H1 (cell line): ENCODE measurements at regions of chrX and their contacts with region 1.

Region 1: DNA sequence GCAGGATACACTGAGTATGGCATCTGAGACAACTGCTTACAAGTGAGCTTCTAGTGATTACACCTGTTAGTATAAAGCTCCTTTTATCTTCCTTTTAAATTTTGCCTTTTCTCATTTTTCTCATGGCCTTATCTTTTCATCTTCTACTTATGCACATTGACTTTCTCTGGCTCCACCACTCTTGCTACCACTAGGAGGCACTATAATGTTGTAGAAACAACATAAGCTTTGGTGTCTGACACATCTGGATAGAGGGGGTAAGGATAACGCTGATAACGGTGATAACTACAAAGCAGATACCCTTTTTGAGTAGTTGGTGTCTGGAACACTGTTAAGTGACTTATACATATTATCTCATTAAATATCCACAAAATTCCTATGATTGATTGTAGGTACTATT is 187.4 kb upstream of the TEX13C start:
- DNase-seq: no peak
- H3K4me3 ChIP-seq: no peak overlapping the region
- H3K27ac ChIP-seq: no peak overlapping the region
- H3K4me1 ChIP-seq: no peaks in the 10 kb centered on the region
- H3K27me3 ChIP-seq: no peaks in the 10 kb centered on the region
- CTCF ChIP-seq: peak in 1 of 3 experiments; percentile 55; a peak in 2 of 4 replicates
- EP300 ChIP-seq: no peak
- POLR2A ChIP-seq: no peak
- RAD21 ChIP-seq: peak; percentile 66 to 69

Region 2: DNA sequence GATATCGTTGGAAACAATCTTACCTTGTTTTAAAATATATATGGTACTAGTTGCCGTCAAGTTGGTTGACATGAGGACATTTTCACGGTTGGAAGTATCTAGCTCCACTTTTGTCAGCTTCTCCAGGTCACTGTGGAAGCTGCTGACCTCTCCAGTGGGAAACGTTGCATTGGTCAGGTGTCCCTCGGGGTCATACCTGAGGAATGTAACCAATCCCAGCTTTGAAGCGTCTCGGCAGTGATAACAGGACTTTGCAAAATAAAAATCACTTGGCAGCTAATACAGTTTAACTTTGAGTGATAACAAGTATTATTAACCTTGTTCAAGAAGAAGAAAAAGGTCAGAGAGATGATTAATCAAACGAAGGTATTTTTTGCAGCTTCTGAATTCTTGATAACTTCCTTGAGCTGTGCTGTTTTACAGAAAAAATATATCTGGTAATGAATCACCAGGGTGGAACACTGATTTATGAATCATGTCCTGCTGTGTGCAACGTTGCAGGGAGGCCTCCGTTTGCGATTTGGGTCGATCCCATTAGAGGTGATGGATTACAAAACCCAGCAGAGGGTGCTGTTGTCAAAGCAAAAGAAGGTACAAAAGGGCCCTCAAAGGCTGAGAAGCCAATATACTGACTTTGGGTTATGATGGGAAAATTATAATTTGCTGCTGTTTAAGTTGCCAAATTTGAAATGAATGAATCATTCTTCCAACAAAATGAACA is 725.8 kb before region 1 on chrX:
- CTCF ChIA-PET with region 1: interaction called, 24 read pairs
- POLR2A ChIA-PET with region 1: no interaction called
- DNase-seq: peak in 1 of 2 experiments; percentile 49
- H3K4me3 ChIP-seq: no peak overlapping the region
- H3K27ac ChIP-seq: no peak overlapping the region
- H3K4me1 ChIP-seq: no peaks in the 10 kb centered on the region
- H3K27me3 ChIP-seq: no peaks in the 10 kb centered on the region
- CTCF ChIP-seq: peak; percentile 27 to 56 (median 53)
- EP300 ChIP-seq: no peak
- POLR2A ChIP-seq: no peak
- RAD21 ChIP-seq: peak; percentile 86 to 87

Region 3: GRCh38 chrX:125089761-125090445 is 42.4 kb before region 1 on chrX:
- CTCF ChIA-PET with region 1: no interaction called
- POLR2A ChIA-PET with region 1: no interaction called
- DNase-seq: no peak
- H3K4me3 ChIP-seq: no peak overlapping the region
- H3K27ac ChIP-seq: no peak overlapping the region
- H3K4me1 ChIP-seq: no peaks in the 10 kb centered on the region
- H3K27me3 ChIP-seq: no peaks in the 10 kb centered on the region
- CTCF ChIP-seq: no peak
- EP300 ChIP-seq: no peak
- POLR2A ChIP-seq: no peak
- RAD21 ChIP-seq: no peak

Region 4: DNA sequence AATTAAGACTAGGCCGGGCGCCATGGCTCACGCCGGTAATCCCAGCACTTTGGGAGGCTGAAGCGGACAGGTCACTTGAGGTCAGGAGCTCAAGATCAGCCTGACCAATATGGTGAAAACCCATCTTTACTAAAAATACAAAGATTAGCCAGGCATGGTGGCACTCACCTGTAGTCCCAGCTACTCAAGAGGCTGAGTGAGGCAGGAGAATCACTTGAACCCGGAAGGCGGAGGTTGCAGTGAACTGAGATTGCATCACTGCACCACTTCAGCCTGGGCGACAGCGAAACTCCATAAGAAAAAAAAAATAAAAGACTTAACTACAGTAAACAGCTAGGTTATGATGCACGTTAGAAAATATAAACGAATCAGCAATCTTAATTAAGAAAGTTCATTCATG is 28.6 kb before region 1 on chrX:
- CTCF ChIA-PET with region 1: interaction called, 11 read pairs
- POLR2A ChIA-PET with region 1: no interaction called
- DNase-seq: no peak
- H3K4me3 ChIP-seq: no peak overlapping the region
- H3K27ac ChIP-seq: no peak overlapping the region
- H3K4me1 ChIP-seq: no peaks in the 10 kb centered on the region
- H3K27me3 ChIP-seq: no peaks in the 10 kb centered on the region
- CTCF ChIP-seq: no peak
- EP300 ChIP-seq: no peak
- POLR2A ChIP-seq: no peak
- RAD21 ChIP-seq: no peak